Activated B cell treated with CpG ODN at 0.5 μM for 24 hours (primary cell): ENCODE measurements at regions of chr3 and their contacts with region 1.

Region 1: DNA sequence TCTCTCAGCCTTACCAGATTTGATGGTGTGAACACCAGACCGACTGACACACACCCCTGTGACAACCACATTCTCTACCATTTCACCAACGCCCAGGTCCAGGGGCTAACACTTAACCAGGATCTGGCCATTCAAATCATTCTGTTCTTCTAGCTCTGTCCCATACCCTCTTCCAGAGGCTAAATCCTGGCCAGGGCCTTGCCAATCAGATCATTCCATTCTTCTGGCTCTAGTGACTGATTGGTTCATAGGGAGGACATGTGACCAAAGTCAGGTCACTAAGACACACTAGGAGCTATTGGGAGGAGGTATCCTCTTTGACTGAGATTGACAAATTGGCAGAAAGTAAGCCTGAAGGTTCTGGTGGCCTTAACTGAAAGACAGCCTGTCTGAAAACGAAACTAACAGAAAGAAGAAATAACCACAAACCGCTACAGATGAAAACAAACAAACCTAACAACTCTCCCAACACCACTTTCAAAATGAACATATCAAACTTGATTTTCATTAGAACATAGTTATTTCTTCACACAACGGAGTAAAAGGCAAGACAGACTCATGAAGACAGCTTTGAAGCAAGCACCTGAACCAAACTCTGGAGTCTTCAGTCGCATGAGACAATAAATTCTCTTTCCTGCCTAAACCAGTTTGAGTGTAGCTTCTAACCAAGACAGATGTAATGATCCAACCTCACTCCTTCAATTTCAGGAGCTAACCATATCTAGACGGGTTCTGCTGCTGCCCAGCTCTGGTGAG is 68.5 kb downstream of the TRANK1 start:
- DNase-seq: no peak
- ATAC-seq: peak; percentile 85
- H3K4me3 Mint-ChIP-seq: peak overlapping the region; percentile 75
- H3K27ac Mint-ChIP-seq: peak overlapping the region; percentile 96
- H3K4me1 Mint-ChIP-seq: peaks cover 55% of the 10 kb centered on the region
- H3K27me3 Mint-ChIP-seq: no peaks in the 10 kb centered on the region
- CTCF ChIP-seq: no peak

Region 2: GRCh38 chr3:36923523-36923943 is 47.2 kb after region 1 on chr3:
- CTCF ChIA-PET with region 1: no interaction called
- POLR2A ChIA-PET with region 1: interaction called, 12 read pairs
- intact Hi-C with region 1: no loop called
- DNase-seq: no peak
- ATAC-seq: no peak
- H3K4me3 Mint-ChIP-seq: peak overlapping the region; percentile 85
- H3K27ac Mint-ChIP-seq: peak overlapping the region; percentile 87
- H3K4me1 Mint-ChIP-seq: peaks cover 60% of the 10 kb centered on the region
- H3K27me3 Mint-ChIP-seq: no peaks in the 10 kb centered on the region
- CTCF ChIP-seq: no peak